ENCODE measurements at regions of chr17 and their contacts with region 1.

Region 1: DNA sequence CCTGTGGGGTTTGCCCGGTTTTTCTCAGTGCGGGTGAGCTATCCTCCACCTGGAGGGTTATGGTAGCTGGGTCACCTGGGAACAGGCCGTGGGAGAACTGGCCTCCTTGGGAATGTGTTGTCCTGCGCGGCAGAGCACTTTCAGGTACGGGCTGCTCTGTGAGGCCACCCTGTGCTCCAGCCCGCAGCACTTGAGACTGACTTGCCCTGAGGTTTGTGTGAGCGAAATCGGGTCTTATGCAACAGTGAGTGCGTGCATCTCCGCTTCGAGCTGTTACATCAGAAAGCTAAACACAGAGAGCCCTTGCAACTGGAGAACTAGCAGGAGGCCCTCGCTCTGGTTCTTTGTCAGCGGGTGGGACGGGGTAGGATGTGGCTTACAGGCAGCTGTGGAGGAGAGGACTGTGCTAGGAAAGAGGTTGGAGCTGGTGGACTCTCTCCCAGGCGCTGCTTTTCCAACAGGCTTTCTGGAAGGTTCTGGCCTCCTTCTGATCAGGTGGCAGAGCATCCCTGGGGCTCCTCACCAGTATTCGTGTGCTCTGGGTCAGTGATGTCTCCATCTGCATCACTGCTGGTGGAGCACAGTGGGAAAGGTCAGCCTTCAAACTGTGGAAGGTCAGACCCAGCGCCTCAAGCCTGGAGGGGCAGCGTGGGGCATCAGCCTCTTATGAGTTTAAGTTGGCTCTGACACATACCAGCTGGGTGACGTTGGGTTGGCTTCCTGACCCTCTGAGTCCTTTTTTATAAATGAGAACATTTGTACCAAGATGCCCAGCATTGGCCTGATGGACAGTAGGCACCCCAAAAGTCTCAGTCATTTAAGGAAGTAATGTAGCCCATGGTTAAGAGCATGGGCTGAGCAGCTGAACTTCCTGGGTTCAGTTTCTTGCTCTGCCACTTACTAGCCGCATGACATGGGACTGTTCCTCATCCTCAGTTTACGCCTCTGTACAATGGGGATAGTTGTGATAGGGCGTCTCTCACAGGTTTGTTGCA is 76.3 kb downstream of the KSR1 start:
- H3K4me3 ChIP-seq: no peak overlapping the region
- H3K27ac ChIP-seq: no peak overlapping the region; the same call in 1 of the 2 replicates
- H3K4me1 ChIP-seq: peaks cover 23% of the 10 kb centered on the region
- CTCF ChIP-seq: no peak

Region 2: DNA sequence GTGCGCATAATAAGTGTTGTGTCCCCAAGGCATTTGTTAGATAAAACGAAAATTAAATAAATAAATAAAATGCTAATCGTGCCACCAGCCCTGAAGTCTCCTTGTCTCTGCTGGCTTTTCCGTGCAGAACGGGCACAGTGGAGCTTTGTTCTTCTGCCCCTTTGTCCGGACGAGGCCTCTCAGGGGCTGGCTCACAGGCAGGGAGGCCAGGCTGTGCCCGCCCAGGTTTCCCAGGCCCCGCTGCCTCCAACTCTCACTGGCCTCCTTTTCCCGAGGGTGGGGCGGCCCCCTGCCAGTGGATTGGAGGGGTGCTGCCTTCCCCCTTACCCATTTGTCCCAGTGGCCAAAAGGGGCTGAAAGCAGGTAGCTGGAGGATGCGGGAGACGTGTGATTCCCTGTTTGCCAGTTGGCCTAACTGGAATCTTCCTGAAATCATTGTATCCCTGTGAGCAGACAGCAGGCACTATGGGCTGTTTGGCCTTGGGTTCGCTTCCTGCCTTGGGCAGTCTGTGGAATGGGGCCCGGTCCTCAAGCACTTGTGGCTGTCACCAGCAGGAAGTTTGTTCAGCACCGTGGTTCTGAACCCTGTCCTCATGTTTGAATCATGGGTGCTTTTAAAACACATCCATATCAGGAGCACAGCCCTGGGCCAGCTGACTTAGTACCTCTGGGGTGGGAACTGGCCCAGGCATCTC is 11.9 kb before region 1 on chr17:
- CTCF ChIA-PET with region 1: interaction called, 12 read pairs
- POLR2A ChIA-PET with region 1: no interaction called
- H3K4me3 ChIP-seq: no peak overlapping the region
- H3K27ac ChIP-seq: no peak overlapping the region
- H3K4me1 ChIP-seq: no peaks in the 10 kb centered on the region
- CTCF ChIP-seq: no peak